PC-3 (cell line): ENCODE measurements at regions of chr10 and their contacts with region 1.

Region 1: DNA sequence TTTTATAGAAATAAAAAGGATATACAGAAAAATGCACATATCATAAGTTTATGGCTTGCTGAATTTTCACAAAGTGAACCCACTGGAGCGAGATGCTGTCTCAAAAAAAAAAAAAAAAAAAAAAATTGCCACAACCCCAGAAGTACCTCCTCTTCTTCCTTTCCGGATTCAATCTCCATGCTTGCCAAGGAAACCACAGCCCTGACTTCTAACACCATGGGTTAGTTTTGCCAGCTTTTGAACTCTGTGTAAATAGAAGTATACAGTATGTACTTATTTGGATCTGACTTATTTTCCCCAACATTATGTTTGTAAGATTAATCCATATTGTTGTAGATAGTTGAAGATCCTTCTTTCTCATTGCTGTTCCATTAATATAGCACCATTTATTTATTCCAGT is 40.0 kb downstream of the FANK1 start:
- DNase-seq: peak; percentile 28
- ATAC-seq: no peak
- H3K4me3 ChIP-seq: no peak overlapping the region
- H3K27ac ChIP-seq: no peak overlapping the region
- H3K4me1 ChIP-seq: peaks cover 13% of the 10 kb centered on the region
- H3K27me3 ChIP-seq: no peaks in the 10 kb centered on the region
- CTCF ChIP-seq: no peak

Region 2: DNA sequence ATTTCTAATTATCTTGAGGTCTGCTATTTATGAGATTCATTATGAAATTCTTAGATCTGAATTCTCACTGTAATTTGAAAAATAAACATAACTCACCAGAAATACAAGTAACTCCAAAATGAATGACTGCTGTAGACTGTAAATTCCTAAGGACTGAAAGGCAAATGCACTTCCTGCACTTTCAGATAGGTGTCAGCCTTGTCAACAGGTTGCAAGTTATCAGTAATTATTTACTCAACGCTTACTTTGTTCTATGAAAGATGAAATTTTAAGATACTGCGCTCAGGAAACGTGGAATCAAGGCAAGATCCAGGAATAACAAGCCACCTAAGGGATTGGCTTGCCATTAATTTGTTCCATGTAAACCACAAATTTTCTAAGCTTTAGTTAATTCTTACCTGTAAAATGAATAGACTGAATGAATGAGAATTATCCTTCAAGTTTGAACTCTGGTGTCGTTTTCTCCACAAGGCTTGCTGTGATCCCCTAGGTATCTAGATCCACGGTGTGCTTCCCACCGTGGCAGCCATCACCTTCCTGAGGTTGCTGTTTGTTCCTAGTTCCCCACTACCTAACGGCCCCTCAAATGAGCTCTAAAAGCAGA is 67.9 kb before region 1 on chr10:
- CTCF ChIA-PET with region 1: no interaction called
- POLR2A ChIA-PET with region 1: no interaction called
- intact Hi-C with region 1: loop called (anchors 2 kb)
- DNase-seq: peak; percentile 74
- ATAC-seq: peak; percentile 67
- H3K4me3 ChIP-seq: no peak overlapping the region
- H3K27ac ChIP-seq: no peak overlapping the region
- H3K4me1 ChIP-seq: no peaks in the 10 kb centered on the region
- H3K27me3 ChIP-seq: no peaks in the 10 kb centered on the region
- CTCF ChIP-seq: peak; percentile 90

Region 3: GRCh38 chr10:125911975-125912374 is 24.4 kb before region 1 on chr10:
- CTCF ChIA-PET with region 1: no interaction called
- POLR2A ChIA-PET with region 1: no interaction called
- intact Hi-C with region 1: no loop called
- DNase-seq: peak; percentile 22
- ATAC-seq: peak; percentile 61
- H3K4me3 ChIP-seq: no peak overlapping the region
- H3K27ac ChIP-seq: no peak overlapping the region
- H3K4me1 ChIP-seq: 0 out of 2 replicates have a peak, but pooled peaks cover 6% of the 10 kb centered on the region
- H3K27me3 ChIP-seq: no peaks in the 10 kb centered on the region
- CTCF ChIP-seq: no peak

Region 4: DNA sequence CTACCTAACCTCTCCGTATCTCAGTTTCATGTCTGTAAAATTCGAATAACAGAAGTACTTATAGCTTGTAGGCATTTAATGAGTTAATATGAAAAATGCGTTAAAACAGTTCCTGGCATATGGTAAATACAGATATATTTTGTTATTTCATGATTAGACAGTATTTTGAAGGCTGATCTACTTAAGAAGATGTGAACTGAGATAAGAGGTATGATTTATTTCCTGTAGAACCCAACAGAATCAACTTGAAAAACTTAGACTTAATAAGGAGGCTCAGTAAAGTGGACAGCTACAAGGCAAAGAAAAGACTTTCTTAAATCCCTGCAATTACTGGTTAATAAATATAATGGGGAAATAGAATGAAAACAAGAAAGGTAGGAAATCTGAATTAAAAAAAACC is 63.4 kb after region 1 on chr10:
- CTCF ChIA-PET with region 1: interaction called, 12 read pairs
- POLR2A ChIA-PET with region 1: no interaction called
- intact Hi-C with region 1: no loop called
- DNase-seq: no peak
- ATAC-seq: no peak
- H3K4me3 ChIP-seq: no peak overlapping the region
- H3K27ac ChIP-seq: no peak overlapping the region
- H3K4me1 ChIP-seq: no peaks in the 10 kb centered on the region
- H3K27me3 ChIP-seq: no peaks in the 10 kb centered on the region
- CTCF ChIP-seq: no peak

Region 5: DNA sequence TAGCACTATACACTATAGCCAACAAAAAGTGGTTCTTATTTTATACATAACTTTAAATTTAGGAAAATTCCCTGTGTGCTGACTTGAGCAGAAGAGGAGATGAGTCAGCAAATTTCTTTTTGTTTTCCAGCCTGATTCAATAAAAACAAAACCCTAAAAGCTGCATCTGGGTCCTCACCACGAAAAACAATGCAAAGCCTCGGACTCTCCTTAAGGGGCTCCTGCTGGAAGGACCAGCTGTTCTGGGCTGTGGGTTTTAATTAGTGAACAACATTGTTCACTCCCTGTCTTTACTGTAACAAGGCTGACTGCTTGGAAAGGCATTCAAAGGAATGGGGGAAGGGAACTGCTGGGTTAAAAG is 211.9 kb after region 1 on chr10:
- CTCF ChIA-PET with region 1: no interaction called
- POLR2A ChIA-PET with region 1: no interaction called
- intact Hi-C with region 1: no loop called
- DNase-seq: no peak
- ATAC-seq: no peak
- H3K4me3 ChIP-seq: no peak overlapping the region
- H3K27ac ChIP-seq: no peak overlapping the region
- H3K4me1 ChIP-seq: peaks cover 5% of the 10 kb centered on the region; the same call in 1 of the 2 replicates
- H3K27me3 ChIP-seq: no peaks in the 10 kb centered on the region
- CTCF ChIP-seq: no peak

Region 6: DNA sequence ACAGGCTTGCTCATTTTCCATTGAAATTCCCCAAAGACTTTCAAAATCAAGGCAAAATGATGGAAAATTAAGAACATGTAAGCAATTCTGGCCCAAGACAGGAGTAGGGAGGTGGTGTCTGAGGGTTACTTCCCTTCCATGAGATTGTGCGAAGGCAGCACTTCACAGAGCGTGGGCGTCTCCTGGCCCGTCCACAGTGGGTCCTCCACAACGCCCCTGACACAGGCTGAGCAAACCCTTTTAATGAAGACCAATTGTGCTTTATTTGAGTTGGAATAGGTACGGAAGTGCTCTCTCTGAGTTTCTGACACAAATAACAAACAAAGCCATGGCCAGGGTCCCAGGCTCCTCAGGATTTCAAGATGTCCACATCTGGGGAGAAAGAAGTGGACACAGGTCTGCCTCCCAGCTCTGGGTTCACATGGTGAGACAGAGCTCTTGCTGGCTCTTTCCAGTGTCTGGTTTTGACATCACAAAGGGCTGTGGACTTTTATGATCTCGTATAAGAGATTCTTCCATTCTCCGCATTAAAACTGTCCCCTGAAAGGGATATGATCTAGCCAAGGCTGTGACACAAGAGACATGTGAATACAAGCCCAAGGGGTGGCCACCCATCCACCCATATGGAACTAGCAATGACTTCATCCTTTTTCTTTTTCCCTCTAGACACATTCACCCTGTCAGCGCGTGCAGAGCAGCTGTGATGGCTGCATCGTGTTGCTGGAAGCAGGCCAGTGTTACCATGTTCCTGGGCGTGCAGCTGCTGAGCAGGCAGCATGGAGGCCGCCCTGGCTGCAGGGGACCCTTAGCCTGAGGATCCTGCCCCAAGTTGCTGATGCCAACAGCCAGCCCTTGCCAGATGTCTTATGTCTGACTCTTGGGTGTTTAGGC is 306.3 kb after region 1 on chr10:
- CTCF ChIA-PET with region 1: no interaction called
- POLR2A ChIA-PET with region 1: no interaction called
- intact Hi-C with region 1: no loop called
- DNase-seq: no peak
- ATAC-seq: no peak
- H3K4me3 ChIP-seq: no peak overlapping the region
- H3K27ac ChIP-seq: no peak overlapping the region
- H3K4me1 ChIP-seq: peaks cover 11% of the 10 kb centered on the region
- H3K27me3 ChIP-seq: no peaks in the 10 kb centered on the region
- CTCF ChIP-seq: no peak

Region 7: GRCh38 chr10:126302826-126303665 is 366.7 kb after region 1 on chr10:
- CTCF ChIA-PET with region 1: interaction called, 10 read pairs
- POLR2A ChIA-PET with region 1: no interaction called
- intact Hi-C with region 1: loop called (anchors 5 kb)
- DNase-seq: peak; percentile 4
- ATAC-seq: peak; percentile 38; the same call in 1 of the 2 replicates
- H3K4me3 ChIP-seq: no peak overlapping the region
- H3K27ac ChIP-seq: no peak overlapping the region
- H3K4me1 ChIP-seq: no peaks in the 10 kb centered on the region
- H3K27me3 ChIP-seq: no peaks in the 10 kb centered on the region
- CTCF ChIP-seq: peak; percentile 41